ENCODE measurements at regions of chr21 and their contacts with region 1.

Region 1: GRCh38 chr21:18630446-18630845 is 226.9 kb upstream of the TMPRSS15 start:
- DNase-seq: peak; percentile 11
- ATAC-seq: no peak
- H3K4me3 ChIP-seq: no peak overlapping the region
- H3K27ac ChIP-seq: no peak overlapping the region
- H3K4me1 ChIP-seq: no peaks in the 10 kb centered on the region
- H3K27me3 ChIP-seq: no peaks in the 10 kb centered on the region
- CTCF ChIP-seq: no peak

Region 2: GRCh38 chr21:18840239-18840638 is 209.8 kb after region 1 on chr21:
- CTCF ChIA-PET with region 1: no interaction called
- POLR2A ChIA-PET with region 1: no interaction called
- intact Hi-C with region 1: no loop called
- DNase-seq: peak; percentile 75
- ATAC-seq: peak; percentile 59
- H3K4me3 ChIP-seq: no peak overlapping the region
- H3K27ac ChIP-seq: no peak overlapping the region
- H3K4me1 ChIP-seq: no peaks in the 10 kb centered on the region; the same call in 1 of the 2 replicates
- H3K27me3 ChIP-seq: no peaks in the 10 kb centered on the region
- CTCF ChIP-seq: peak; percentile 63

Region 3: DNA sequence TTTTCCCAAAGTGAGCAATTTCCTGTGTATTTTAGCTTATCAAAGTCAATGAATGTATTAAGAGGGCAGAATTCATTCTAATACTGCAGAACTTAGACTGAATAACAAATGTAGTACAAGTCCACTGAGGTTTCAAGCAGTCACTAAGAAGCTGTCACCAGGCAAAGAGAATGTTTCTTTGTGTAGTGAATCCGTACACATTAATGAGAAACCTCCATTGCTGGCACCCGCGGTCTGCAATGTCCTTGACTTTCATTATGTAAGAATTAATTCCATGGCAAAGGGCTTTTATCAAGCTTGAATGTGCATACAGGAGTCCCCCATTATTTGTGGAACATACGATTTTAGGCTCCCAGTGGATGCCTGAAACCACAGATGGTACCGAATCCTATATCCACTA is 492.6 kb after region 1 on chr21:
- CTCF ChIA-PET with region 1: no interaction called
- POLR2A ChIA-PET with region 1: interaction called, 17 read pairs
- intact Hi-C with region 1: no loop called
- DNase-seq: no peak
- ATAC-seq: no peak
- H3K4me3 ChIP-seq: no peak overlapping the region
- H3K27ac ChIP-seq: no peak overlapping the region
- H3K4me1 ChIP-seq: no peaks in the 10 kb centered on the region
- H3K27me3 ChIP-seq: no peaks in the 10 kb centered on the region
- CTCF ChIP-seq: no peak